Breast epithelium (tissue), 4 donors: ENCODE measurements at regions of chr2 and their contacts with region 1.

Region 1: DNA sequence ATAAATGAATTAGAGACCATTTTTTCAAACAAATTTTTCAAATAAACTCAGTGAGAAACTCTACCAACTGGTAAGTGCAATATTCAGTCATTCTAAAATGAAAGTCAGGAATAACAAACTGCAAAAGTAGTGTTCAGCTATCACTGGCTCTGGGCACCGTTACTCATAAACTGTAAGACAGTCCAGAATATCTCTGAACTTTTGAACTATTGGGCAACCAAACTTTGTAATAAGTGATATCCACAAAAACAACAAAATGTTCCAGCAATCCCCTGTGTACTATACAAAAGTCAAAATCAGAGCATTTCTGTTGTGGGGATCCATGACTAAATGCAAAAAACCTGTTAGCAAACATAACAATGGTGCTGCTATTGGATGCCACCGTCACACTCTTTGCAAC is 56.3 kb downstream of the SLC25A12 start:
- DNase-seq: no peak
- H3K4me3 ChIP-seq: no peak overlapping the region
- H3K27ac ChIP-seq: no peak overlapping the region
- H3K4me1 ChIP-seq: no peaks in the 10 kb centered on the region
- H3K27me3 ChIP-seq: no peaks in the 10 kb centered on the region
- CTCF ChIP-seq: no peak
- POLR2A ChIP-seq: no peak

Region 2: DNA sequence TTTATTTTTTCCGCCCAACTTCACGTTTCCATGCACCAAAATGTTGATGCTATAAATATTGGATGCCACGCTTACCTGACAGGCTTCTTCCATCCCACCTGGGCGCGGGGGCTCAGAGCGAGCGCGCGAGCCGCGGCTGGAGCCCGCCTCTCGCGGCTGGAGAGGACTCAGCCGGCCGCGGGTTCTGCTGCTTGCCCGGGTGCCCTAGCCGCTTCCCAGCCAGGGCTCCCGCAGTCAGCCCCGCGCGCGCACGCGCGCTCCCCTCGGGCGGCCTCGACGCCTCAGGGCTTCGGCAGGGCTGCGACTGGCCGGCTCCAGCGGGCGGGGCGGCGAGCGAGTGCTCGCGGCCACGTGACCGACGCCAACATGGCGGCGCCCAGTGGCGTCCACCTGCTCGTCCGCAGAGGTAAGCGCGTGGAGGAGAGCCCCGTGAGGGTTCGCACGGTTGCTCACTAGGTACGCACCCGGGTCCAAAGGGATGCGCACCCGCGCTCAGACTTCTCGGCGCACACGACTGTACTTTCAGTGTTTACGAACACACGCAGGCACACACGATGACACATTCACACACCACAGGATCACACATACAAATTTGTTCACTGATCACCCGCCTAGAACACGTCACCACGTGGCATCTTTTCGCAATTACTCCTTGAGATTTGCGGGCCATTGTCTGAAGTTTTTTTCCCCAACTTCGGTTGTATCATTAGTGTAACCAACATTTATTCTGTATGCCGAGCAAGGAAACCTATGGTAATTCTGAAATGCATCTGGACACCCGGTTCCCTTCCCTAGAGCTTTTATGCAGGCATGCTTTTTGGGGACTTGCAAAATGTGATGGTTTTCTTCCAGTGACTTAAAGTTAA is 162.1 kb after region 1 on chr2 and contains the start of gene METAP1D:
- intact Hi-C with region 1: loop called (anchors 5 kb)
- DNase-seq: peak; percentile 56 to 73
- H3K4me3 ChIP-seq: peak within 1 kb of the TSS; percentile 68 to 78 (median 77)
- H3K27ac ChIP-seq: peak within 1 kb of the TSS in 1 of 2 donors; percentile 33
- H3K4me1 ChIP-seq: no peaks in the 10 kb centered on the region
- H3K27me3 ChIP-seq: no peaks in the 10 kb centered on the region
- CTCF ChIP-seq: no peak
- POLR2A ChIP-seq: no peak
- total RNA-seq, gene METAP1D: 6.2 to 12.5 (median 7.8) TPM